HepG2 (cell line): ENCODE measurements at regions of chr18 and their contacts with region 1.

Region 1: DNA sequence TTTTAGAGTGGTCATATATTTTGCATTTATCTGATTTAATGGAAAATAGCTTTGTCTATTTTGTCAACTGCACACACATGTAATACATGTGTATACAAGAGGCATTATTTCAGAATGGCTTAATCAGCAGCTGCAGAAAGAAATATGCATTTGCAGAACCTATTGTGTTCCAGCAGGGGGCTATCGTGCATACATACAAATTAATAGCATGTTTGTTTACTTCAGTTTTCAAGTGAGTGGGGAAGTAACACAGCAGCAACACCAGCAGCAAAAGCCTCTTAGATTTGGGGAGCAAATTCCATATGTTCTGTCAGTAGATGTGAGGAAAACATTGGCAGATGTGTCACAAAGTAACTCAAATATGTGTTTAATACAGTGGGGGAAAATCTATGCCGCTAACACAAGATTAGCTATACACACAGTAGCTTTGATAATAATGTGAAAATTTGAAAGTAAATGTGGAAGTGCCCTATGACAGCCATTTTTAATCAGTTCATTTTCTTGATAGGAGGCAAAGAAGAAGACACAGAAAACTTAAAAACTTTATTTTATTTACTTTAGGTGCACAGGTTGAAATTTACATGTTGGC is 218.1 kb downstream of the WDR7 start:
- DNase-seq: peak; percentile 32
- ATAC-seq: peak; percentile 67
- H3K4me3 ChIP-seq: no peak overlapping the region
- H3K27ac ChIP-seq: no peak overlapping the region
- H3K4me1 ChIP-seq: no peaks in the 10 kb centered on the region
- H3K27me3 ChIP-seq: no peaks in the 10 kb centered on the region
- CTCF ChIP-seq: peak; percentile 73
- EP300 ChIP-seq: no peak
- POLR2A ChIP-seq: no peak
- RAD21 ChIP-seq: 0 out of 2 replicates have a peak, but pooled peaks have one; percentile 34

Region 2: DNA sequence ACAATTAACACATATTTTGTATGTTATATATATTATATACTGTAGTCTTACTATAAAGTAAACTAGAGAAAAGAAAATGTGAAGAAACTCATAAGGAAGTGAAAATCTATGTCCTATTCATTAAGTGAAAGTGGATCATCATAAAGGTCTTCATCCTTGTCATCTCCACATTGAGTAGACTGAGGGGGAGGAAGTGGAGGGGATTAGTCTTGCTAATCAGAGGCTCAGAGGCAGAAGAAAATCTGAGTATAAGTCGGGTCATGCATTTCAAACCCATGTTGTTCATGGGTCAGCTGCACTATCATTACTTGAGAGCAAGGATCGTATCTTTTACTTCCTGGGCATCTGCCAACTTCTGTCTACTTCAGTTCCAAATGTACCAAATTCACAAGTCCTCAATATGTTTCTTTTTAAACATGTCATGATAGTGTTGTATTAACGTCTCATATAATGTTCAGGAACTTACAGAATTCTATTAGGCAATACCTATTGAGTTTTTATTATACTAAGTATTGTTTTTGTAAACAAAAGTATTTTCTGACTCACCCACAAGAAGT is 68.7 kb after region 1 on chr18:
- CTCF ChIA-PET with region 1: no interaction called
- POLR2A ChIA-PET with region 1: no interaction called
- in situ Hi-C with region 1: no loop called
- intact Hi-C with region 1: no loop called
- DNase-seq: no peak
- ATAC-seq: no peak
- H3K4me3 ChIP-seq: no peak overlapping the region
- H3K27ac ChIP-seq: no peak overlapping the region
- H3K4me1 ChIP-seq: no peaks in the 10 kb centered on the region
- H3K27me3 ChIP-seq: no peaks in the 10 kb centered on the region
- CTCF ChIP-seq: no peak
- EP300 ChIP-seq: no peak
- POLR2A ChIP-seq: no peak
- RAD21 ChIP-seq: no peak

Region 3: GRCh38 chr18:57004366-57005121 is 135.3 kb after region 1 on chr18:
- CTCF ChIA-PET with region 1: no interaction called
- POLR2A ChIA-PET with region 1: no interaction called
- in situ Hi-C with region 1: no loop called
- intact Hi-C with region 1: loop called (anchors 10 kb)
- DNase-seq: peak; percentile 27
- ATAC-seq: no peak
- H3K4me3 ChIP-seq: no peak overlapping the region
- H3K27ac ChIP-seq: no peak overlapping the region
- H3K4me1 ChIP-seq: peaks cover 21% of the 10 kb centered on the region
- H3K27me3 ChIP-seq: no peaks in the 10 kb centered on the region
- CTCF ChIP-seq: no peak
- EP300 ChIP-seq: no peak; a peak in 1 of 4 replicates
- POLR2A ChIP-seq: no peak
- RAD21 ChIP-seq: no peak

Region 4: DNA sequence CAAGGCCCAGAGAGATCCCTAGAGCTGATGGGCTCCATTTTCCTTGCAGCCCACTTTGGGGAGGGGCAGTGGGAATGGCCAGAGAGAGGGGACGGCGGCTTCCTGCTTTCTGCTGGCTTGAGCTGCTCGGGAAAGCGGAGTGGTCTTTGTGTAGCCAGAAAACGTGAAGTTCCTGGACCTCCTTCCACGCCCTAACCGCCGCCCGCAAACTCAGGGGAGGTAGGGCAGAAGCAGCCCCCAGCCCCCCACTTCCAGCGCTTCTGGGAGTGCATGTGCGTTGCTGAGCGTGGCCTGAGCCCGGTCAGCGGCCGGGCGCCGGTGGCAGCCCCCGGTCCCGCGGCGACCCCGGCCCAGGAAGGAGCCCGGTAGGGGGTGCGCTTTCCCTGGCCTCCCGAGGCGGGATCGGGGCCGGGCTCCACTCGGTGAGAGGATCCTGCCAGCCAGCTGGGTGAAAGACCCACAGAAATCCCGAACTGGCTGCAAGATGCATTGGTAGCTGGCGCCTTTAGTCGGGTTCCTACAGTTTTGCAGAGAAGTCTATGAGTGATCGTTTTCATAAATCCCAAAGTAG is 252.3 kb after region 1 on chr18:
- CTCF ChIA-PET with region 1: no interaction called
- POLR2A ChIA-PET with region 1: no interaction called
- in situ Hi-C with region 1: no loop called
- intact Hi-C with region 1: loop called (anchors 10 kb)
- DNase-seq: no peak
- ATAC-seq: no peak
- H3K4me3 ChIP-seq: no peak overlapping the region
- H3K27ac ChIP-seq: no peak overlapping the region
- H3K4me1 ChIP-seq: peaks cover 6% of the 10 kb centered on the region; the same call in 1 of the 2 replicates
- H3K27me3 ChIP-seq: peaks cover 0 to 7% of the 10 kb centered on the region in 2 experiments; a peak in 2 of 5 replicates
- CTCF ChIP-seq: no peak
- EP300 ChIP-seq: no peak
- POLR2A ChIP-seq: no peak
- RAD21 ChIP-seq: no peak

Region 5: GRCh38 chr18:57446322-57446721 is 577.0 kb after region 1 on chr18:
- CTCF ChIA-PET with region 1: interaction called, 10 read pairs
- POLR2A ChIA-PET with region 1: no interaction called
- in situ Hi-C with region 1: loop called (anchors 10 kb)
- intact Hi-C with region 1: loop called (anchors 1 kb)
- DNase-seq: peak; percentile 31
- ATAC-seq: peak; percentile 81
- H3K4me3 ChIP-seq: peak overlapping the region in 2 of 3 experiments; percentile 13 to 49; a peak in 1 of 6 replicates
- H3K27ac ChIP-seq: peak overlapping the region; percentile 71
- H3K4me1 ChIP-seq: peaks cover 53% of the 10 kb centered on the region
- H3K27me3 ChIP-seq: no peaks in the 10 kb centered on the region
- CTCF ChIP-seq: peak; percentile 85
- EP300 ChIP-seq: no peak
- POLR2A ChIP-seq: no peak
- RAD21 ChIP-seq: peak; percentile 59

Region 6: DNA sequence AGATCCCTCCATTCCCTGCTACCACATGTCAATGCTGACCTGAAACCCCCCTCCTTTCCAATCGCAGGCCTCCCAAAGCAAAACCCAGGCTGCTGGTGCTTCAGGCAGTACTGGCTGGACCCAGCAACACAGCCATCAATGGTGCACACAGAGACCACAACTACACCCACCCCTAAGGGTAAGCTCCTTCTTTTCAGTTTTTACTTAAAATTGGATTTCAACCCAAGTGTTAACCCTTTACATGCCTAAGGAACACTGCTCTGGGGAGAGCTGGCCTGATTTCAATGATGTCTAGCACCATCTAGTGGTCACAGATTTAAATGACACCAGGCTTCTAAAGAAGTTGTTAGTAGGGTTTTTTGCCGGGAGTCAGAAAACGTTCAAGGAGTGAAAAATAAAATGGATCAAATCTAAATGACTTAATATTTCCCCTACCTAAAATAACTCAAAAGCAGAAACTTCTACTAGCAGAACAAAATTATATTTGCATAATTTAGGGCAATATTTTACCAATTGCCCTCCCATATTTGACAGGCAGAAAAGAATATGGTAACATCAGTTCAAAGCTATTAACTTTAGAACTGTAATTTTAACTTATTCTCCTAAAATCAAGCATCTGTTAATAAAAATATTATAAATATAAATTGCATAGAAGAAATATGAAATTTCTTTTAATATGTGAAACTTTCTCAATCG is 692.6 kb after region 1 on chr18:
- CTCF ChIA-PET with region 1: interaction called, 12 read pairs
- POLR2A ChIA-PET with region 1: no interaction called
- in situ Hi-C with region 1: no loop called
- intact Hi-C with region 1: loop called (anchors 1 kb)
- DNase-seq: peak; percentile 47
- ATAC-seq: peak; percentile 45; the same call in 1 of the 3 replicates
- H3K4me3 ChIP-seq: no peak overlapping the region
- H3K27ac ChIP-seq: no peak overlapping the region
- H3K4me1 ChIP-seq: no peaks in the 10 kb centered on the region
- H3K27me3 ChIP-seq: no peaks in the 10 kb centered on the region
- CTCF ChIP-seq: peak; percentile 81
- EP300 ChIP-seq: no peak
- POLR2A ChIP-seq: no peak
- RAD21 ChIP-seq: peak; percentile 64; the same call in 1 of the 2 replicates